ENCODE measurements at regions of chr17 and their contacts with region 1.

Region 1: DNA sequence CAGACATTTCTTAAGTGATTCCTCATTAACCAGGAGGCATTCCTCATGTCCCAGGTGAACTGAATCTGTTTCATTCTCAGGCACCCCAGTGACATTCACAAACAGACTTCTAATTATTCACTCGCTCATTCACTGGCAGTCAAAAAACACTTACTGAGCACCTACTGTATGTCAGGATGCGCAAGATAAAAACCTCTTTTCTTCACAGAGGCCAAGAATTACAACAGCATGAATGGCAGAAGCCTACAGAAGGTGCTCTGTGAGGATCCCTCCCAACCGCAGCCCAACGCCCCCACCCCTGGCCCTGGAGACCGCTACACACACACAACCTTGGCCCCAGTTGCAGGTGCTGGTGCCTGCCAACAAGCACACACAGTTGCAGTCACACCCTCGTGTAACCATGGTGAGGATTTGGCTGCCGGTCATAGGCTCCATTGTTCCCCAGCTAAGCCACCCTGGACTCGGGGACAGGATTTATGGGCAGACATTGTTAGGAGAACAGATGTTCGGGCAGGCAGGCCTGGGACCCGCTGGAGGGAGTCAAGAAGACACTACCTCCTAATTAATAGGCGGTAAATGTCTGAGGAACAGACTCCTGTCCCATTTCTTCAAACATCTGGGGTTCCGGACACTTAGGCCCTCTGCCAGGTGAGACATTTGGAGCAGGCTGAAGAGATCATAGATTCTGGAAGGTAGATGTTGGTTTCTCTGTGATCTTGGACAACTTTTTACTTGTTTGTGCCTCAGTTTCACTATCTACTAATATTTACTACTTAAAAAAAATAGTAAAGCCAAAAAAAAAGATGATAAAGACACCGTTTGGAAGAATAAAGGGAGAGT is 43.2 kb downstream of the CUEDC1 start:
- DNase-seq: peak; percentile 56 to 81
- ATAC-seq: peak; percentile 74 to 84
- H3K4me3 ChIP-seq: no peak overlapping the region
- H3K27ac ChIP-seq: peak overlapping the region; percentile 35 to 62 (median 57)
- H3K4me1 ChIP-seq: peaks cover 56 to 58% of the 10 kb centered on the region in 2 donors
- H3K27me3 ChIP-seq: no peaks in the 10 kb centered on the region
- CTCF ChIP-seq: no peak
- POLR2A ChIP-seq: no peak

Region 2: GRCh38 chr17:57898487-57899311 is 13.4 kb before region 1 on chr17:
- in situ Hi-C with region 1: no loop called
- intact Hi-C with region 1: loop called (anchors 1 kb)
- DNase-seq: peak in 1 of 2 donors; percentile 77
- ATAC-seq: peak; percentile 21 to 53
- H3K4me3 ChIP-seq: no peak overlapping the region
- H3K27ac ChIP-seq: peak overlapping the region; percentile 94 to 100 (median 98)
- H3K4me1 ChIP-seq: peaks cover 86 to 89% of the 10 kb centered on the region in 2 donors
- H3K27me3 ChIP-seq: no peaks in the 10 kb centered on the region
- CTCF ChIP-seq: no peak
- POLR2A ChIP-seq: no peak

Measured in gastrocnemius medialis (tissue), 4 donors.